Endothelial cell of umbilical vein (primary cell): ENCODE measurements at regions of chr6 and their contacts with region 1.

Region 1: DNA sequence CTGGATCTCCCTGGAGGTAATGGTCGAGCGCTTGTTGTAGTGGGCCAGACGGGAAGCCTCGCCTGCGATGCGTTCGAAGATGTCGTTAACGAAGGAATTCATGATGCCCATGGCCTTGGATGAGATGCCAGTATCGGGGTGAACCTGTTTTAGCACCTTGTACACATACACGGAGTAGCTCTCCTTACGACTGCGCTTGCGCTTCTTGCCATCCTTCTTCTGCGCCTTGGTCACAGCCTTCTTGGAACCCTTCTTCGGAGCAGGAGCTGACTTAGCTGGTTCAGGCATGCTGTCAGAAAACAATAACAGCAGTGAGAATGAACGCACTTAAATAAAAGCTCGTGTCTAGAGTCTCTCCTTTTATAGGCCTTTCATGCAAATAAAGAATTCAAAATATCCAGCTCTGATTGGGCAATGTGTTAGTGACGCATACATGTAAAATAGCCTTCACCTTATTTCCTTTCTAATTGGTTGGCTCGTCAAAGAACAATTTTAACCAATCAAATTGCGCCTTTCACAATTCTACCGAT is 129.2 kb downstream of the HFE start:
- DNase-seq: peak; percentile 99
- H3K4me3 ChIP-seq: peak overlapping the region in 2 of 3 experiments; percentile 42 to 82
- H3K27ac ChIP-seq: peak overlapping the region; percentile 89
- H3K4me1 ChIP-seq: peaks cover 6% of the 10 kb centered on the region
- H3K27me3 ChIP-seq: no peaks in the 10 kb centered on the region
- CTCF ChIP-seq: no peak
- POLR2A ChIP-seq: peak; percentile 99

Region 2: DNA sequence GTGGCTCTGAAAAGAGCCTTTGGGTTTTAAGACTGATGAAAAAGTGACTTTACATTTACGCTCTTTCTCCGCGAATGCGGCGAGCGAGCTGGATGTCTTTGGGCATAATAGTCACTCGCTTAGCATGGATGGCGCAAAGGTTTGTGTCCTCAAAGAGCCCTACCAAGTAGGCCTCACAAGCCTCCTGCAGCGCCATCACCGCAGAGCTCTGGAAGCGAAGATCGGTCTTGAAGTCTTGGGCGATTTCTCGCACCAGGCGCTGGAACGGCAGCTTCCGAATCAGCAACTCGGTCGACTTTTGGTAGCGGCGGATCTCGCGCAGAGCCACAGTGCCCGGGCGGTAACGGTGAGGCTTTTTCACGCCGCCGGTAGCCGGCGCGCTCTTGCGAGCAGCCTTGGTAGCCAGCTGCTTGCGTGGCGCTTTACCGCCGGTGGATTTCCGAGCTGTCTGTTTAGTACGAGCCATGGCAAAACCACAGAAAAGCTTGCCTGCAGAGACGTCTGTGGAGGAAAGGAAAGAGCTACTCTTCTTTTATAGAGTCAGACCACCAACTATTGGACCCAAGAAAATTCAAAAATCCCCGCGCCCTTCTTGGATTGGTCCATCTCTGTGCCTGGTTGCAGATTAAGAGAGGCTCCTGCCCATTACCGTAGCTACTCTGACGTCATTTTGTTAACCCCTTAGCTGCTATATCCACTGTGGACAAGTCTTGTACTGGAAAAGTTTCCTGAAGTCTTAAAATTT is 184.7 kb before region 1 on chr6:
- CTCF ChIA-PET with region 1: no interaction called
- POLR2A ChIA-PET with region 1: interaction called, 13 read pairs
- dilution Hi-C with region 1: no loop called
- intact Hi-C with region 1: no loop called
- DNase-seq: peak; percentile 96
- H3K4me3 ChIP-seq: peak overlapping the region; percentile 45 to 78 (median 47)
- H3K27ac ChIP-seq: peak overlapping the region; percentile 88
- H3K4me1 ChIP-seq: peaks cover 33% of the 10 kb centered on the region
- H3K27me3 ChIP-seq: no peaks in the 10 kb centered on the region
- CTCF ChIP-seq: peak in 1 of 2 donors; percentile 29
- POLR2A ChIP-seq: peak; percentile 99

Region 3: DNA sequence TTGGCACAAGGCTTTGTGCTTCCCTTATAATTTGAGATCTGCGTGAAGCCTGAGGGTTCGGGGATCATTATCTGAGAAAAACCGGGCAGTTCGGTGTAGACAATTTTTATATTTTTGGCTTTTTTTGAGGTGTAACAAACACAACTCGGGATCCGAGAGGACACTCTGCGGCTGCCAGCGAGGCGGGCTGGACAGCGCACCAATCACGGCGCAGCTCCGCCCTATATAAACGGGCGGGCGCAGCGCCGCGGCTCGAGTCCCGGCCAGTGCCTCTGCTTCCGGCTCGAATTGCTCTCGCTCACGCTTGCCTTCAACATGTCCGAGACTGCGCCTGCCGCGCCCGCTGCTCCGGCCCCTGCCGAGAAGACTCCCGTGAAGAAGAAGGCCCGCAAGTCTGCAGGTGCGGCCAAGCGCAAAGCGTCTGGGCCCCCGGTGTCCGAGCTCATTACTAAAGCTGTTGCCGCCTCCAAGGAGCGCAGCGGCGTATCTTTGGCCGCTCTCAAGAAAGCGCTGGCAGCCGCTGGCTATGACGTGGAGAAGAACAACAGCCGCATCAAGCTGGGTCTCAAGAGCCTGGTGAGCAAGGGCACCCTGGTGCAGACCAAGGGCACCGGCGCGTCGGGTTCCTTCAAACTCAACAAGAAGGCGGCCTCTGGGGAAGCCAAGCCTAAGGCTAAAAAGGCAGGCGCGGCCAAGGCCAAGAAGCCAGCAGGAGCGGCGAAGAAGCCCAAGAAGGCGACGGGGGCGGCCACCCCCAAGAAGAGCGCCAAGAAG is 60.2 kb before region 1 on chr6:
- CTCF ChIA-PET with region 1: interaction called, 7 read pairs
- POLR2A ChIA-PET with region 1: interaction called, 37 read pairs
- dilution Hi-C with region 1: no loop called
- intact Hi-C with region 1: no loop called
- DNase-seq: peak; percentile 94
- H3K4me3 ChIP-seq: peak overlapping the region; percentile 45 to 81 (median 68)
- H3K27ac ChIP-seq: peak overlapping the region; percentile 78
- H3K4me1 ChIP-seq: peaks cover 8% of the 10 kb centered on the region
- H3K27me3 ChIP-seq: peaks cover 0 to 3% of the 10 kb centered on the region in 2 experiments
- CTCF ChIP-seq: no peak
- POLR2A ChIP-seq: peak; percentile 97

Region 4: DNA sequence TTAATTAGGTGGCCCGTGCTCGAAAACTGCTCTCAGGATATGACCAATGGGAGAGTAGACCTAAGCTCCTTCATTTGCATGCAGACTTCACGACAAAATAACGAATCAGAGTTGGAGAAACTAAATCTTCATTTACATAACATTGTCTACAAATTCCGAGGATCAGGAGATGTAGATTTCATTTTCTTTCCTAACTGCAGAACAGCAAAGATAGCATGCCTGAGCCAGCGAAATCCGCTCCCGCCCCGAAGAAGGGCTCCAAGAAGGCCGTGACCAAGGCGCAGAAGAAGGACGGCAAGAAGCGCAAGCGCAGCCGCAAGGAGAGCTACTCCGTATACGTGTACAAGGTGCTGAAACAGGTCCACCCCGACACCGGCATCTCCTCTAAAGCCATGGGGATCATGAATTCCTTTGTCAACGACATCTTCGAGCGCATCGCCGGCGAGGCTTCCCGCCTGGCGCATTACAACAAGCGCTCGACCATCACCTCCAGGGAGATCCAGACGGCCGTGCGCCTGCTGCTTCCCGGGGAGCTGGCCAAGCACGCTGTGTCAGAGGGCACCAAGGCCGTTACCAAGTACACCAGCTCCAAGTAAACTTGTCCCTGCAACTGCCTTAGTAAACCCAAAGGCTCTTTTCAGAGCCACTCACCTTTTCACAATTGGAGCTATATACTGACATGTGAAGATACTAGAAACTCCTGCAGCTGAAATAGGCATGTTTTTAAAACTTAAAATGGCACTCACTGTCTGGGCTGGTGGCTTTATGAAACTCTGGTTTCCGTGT is 32.6 kb before region 1 on chr6:
- CTCF ChIA-PET with region 1: interaction called, 14 read pairs
- POLR2A ChIA-PET with region 1: interaction called, 29 read pairs
- dilution Hi-C with region 1: no loop called
- intact Hi-C with region 1: no loop called
- DNase-seq: peak; percentile 93
- H3K4me3 ChIP-seq: peak overlapping the region; percentile 13 to 66 (median 34)
- H3K27ac ChIP-seq: peak overlapping the region; percentile 58
- H3K4me1 ChIP-seq: peaks cover 20% of the 10 kb centered on the region
- H3K27me3 ChIP-seq: no peaks in the 10 kb centered on the region
- CTCF ChIP-seq: no peak
- POLR2A ChIP-seq: peak; percentile 59

Region 5: GRCh38 chr6:26204332-26205165 is 11.9 kb before region 1 on chr6:
- CTCF ChIA-PET with region 1: interaction called, 30 read pairs
- POLR2A ChIA-PET with region 1: interaction called, 122 read pairs
- dilution Hi-C with region 1: no loop called
- intact Hi-C with region 1: loop called (anchors 1 kb)
- DNase-seq: peak; percentile 99
- H3K4me3 ChIP-seq: peak overlapping the region; percentile 37 to 93 (median 86)
- H3K27ac ChIP-seq: peak overlapping the region; percentile 96
- H3K4me1 ChIP-seq: peaks cover 28% of the 10 kb centered on the region
- H3K27me3 ChIP-seq: no peaks in the 10 kb centered on the region
- CTCF ChIP-seq: peak; percentile 18 to 31
- POLR2A ChIP-seq: peak; percentile 99

Region 6: GRCh38 chr6:26249957-26250697 is 33.7 kb after region 1 on chr6:
- CTCF ChIA-PET with region 1: interaction called, 24 read pairs
- POLR2A ChIA-PET with region 1: interaction called, 49 read pairs
- dilution Hi-C with region 1: no loop called
- intact Hi-C with region 1: loop called (anchors 2 kb)
- DNase-seq: peak; percentile 87
- H3K4me3 ChIP-seq: peak overlapping the region; percentile 27 to 85 (median 49)
- H3K27ac ChIP-seq: peak overlapping the region; percentile 67
- H3K4me1 ChIP-seq: peaks cover 3% of the 10 kb centered on the region
- H3K27me3 ChIP-seq: no peaks in the 10 kb centered on the region
- CTCF ChIP-seq: peak; percentile 28 to 52
- POLR2A ChIP-seq: peak; percentile 87